Endothelial cell of umbilical vein (primary cell): ENCODE measurements at regions of chr4 and their contacts with region 1.

Region 1: DNA sequence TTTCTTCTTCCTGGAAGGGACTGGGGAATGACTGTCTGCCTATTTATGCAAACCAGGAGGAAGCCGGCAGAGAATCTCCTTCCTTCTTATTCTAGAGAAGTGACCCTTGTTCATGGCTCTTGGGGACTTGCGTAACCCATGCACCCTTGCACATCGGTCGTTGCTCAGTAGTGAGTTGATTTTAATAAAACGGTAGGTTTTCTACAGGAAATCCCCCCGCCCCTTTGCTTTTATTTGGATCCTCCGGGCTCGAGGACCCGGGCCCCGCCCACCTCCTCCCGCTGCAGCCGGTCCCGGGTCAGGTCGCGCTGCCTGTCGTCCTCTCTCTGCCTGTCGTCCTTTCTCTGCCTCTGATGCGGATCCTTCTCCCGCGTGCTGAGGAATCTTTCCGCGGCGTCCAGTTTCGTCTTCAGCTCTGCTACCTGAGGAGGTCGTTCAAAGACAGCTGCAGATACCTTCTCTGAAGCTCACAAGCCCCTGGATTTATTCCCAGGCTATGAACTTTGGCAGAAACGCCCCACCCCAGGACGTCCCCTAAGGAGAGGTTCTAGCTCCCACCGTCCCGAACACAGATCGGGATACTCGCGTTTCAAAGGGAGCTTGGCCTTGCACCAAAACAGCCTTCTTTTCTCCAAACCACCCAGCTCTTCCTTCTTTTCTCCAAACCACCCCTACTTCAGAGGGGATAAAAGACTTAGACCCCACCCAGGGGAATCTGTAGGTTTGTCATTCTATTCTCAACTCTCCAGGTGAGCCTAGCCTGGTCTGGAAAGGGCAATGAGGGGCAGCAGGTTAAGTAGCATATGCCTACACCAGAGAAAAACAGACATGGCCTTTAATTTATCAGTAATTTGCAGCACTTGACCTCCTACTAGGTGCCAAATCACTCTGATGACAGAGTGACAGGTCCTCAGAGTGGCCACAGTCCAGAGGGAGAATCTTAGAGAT is 7.0 kb downstream of the TNIP3 start:
- DNase-seq: peak; percentile 24
- H3K4me3 ChIP-seq: peak overlapping the region; percentile 45 to 92 (median 80)
- H3K27ac ChIP-seq: peak overlapping the region; percentile 75
- H3K4me1 ChIP-seq: peaks cover 20% of the 10 kb centered on the region
- H3K27me3 ChIP-seq: no peaks in the 10 kb centered on the region
- CTCF ChIP-seq: no peak
- POLR2A ChIP-seq: no peak

Region 2: DNA sequence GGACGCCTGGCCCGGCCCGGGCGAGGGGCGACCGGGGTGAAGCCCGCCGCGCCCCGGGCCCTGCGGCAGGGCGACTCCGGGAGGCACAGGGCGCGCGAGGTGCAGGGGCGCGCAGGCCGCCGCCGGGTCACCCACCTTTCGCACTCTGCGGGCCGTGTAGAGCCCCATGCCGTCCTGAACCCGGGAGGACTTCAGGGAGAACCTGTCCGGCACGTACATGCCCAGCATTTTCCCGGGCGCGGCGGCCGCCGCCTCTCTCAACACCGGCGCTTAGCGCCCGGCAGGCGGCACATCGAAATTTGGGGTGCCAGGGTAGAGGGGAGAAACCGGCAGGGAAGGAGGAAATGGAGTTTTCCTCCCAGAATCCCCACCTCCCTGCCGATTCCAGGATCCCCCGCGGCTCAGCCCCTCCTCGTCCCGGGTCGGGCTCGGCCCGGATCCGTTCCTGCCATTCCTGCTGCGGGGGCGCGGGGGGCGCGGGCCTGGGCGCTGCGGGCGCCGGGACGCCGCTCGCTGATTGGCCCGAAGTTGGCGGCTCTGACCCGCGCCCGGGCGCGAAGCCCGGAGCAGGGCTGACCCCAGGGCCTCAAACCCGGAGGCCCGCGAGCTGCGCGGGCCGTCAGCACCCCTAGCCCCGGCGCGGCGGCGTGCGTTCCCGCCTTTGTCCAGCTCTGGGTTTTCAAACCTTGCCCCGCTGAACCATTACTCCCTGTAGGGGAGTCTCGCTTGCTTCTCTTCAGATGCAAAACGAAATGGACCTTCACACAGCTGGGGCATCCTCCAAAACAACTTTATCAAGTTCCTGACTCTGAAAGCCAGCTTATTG is 234.5 kb before region 1 on chr4 and contains the start of gene PRDM5:
- CTCF ChIA-PET with region 1: no interaction called
- POLR2A ChIA-PET with region 1: no interaction called
- dilution Hi-C with region 1: no loop called
- intact Hi-C with region 1: loop called (anchors 5 kb)
- DNase-seq: peak; percentile 52
- H3K4me3 ChIP-seq: peak within 1 kb of the TSS; percentile 10 to 79 (median 68)
- H3K27ac ChIP-seq: peak within 1 kb of the TSS; percentile 49
- H3K4me1 ChIP-seq: peaks cover 5% of the 10 kb centered on the region
- H3K27me3 ChIP-seq: no peaks in the 10 kb centered on the region
- CTCF ChIP-seq: peak in 1 of 2 donors; percentile 34
- POLR2A ChIP-seq: peak; percentile 27
- total RNA-seq, gene PRDM5: 5.7 and 8.1 TPM in 2 replicates

Region 3: DNA sequence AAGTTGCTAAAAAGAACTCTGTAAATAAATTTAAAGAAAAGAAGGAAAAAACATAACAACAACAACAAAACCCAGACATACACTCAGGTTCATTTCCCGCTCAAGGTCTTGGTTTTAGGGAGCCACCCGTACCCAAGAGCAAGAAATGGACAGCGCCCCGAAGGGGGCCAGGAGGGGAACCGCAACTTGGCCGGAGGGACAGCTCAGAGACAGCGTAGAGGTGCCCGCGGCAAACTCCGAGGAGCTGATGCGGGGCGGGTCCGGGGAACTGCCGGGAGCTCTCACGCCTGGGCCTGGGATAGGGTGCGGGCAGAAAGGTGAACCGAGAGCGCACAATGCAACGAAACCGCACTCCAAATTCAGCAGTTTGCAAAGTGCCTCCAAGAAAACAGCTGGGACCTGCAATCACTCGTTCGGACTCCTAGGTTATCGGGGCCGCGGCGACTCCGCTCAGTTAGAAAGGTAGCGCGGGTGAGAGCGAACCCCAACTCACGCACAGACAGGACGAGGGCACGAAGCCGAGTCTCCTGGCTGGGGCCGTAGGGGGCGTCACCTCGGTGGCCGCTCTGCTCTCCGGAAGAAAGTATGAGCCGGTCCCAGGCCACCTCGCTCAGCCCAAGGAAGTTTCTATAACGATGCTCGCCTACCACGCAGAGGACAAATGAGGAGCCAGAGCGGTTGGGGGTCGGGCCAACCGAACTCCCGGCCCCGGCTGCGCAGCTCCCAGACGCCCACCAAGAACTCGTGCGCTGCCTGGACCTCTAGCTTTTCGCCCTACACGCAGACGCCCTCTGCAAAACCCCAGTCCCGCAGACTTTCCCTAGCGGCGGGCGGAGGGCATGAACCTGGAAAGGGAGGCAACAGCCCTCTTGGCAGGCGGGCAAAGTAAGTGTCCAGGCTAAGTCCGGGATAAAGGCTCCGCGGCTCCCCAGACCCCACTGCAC is 86.1 kb before region 1 on chr4:
- CTCF ChIA-PET with region 1: no interaction called
- POLR2A ChIA-PET with region 1: no interaction called
- dilution Hi-C with region 1: no loop called
- intact Hi-C with region 1: loop called (anchors 2 kb)
- DNase-seq: peak; percentile 13
- H3K4me3 ChIP-seq: peak overlapping the region in 2 of 3 experiments; percentile 14 to 67
- H3K27ac ChIP-seq: no peak overlapping the region
- H3K4me1 ChIP-seq: peaks cover 8% of the 10 kb centered on the region
- H3K27me3 ChIP-seq: peaks cover 37 to 40% of the 10 kb centered on the region in 2 experiments
- CTCF ChIP-seq: peak; percentile 31 to 49
- POLR2A ChIP-seq: no peak

Region 4: DNA sequence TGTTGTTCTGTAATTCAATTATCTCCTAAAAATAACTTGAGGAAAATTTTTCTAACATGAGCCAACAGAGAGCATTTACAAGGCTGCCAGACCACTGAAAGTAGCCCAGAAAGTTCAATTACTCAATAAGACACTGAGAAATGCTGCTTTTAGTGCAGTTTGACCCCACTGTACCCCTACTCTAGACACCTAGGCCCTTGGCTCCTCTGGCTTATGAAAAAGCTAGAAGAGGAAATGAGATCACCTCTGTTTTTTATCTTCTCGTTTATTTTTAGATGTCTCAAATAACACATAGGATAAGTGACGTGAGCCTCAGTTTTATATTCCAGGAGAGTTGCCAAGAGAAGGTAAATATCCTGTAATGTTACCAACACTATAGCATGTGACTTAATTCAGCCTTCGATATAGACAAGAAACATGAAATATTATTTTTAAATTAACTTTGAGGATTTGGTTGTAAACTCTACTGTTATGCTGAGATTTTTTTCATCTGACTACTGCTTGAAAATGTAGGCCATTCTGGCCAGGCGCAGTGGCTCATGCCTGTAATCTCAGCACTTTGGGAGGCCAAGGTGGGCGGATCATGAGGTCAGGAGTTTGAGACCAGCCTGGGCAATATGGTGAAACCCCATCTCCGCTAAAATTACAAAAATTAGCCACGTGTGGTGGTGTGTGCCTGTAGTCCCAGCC is 17.4 kb before region 1 on chr4:
- CTCF ChIA-PET with region 1: interaction called, 3 read pairs
- POLR2A ChIA-PET with region 1: no interaction called
- dilution Hi-C with region 1: no loop called
- intact Hi-C with region 1: loop called (anchors 1 kb)
- DNase-seq: peak; percentile 77
- H3K4me3 ChIP-seq: no peak overlapping the region
- H3K27ac ChIP-seq: peak overlapping the region; percentile 63
- H3K4me1 ChIP-seq: peaks cover 10% of the 10 kb centered on the region
- H3K27me3 ChIP-seq: no peaks in the 10 kb centered on the region
- CTCF ChIP-seq: no peak
- POLR2A ChIP-seq: no peak